Activated CD8-positive, alpha-beta T cell treated with anti-CD3 and anti-CD28 coated beads, Interleukin-2, amount 10 ng/mL, durations not matched to agents 7 days and 5 days (primary cell): ENCODE measurements at regions of chr10 and their contacts with region 1.

Region 1: GRCh38 chr10:6667679-6668270 is 87.7 kb upstream of the PRKCQ start:
- DNase-seq: peak; percentile 70
- ATAC-seq: no peak
- H3K4me3 Mint-ChIP-seq: no peak overlapping the region
- H3K27ac Mint-ChIP-seq: no peak overlapping the region
- H3K4me1 Mint-ChIP-seq: peaks cover 32% of the 10 kb centered on the region
- H3K27me3 Mint-ChIP-seq: peaks cover 5% of the 10 kb centered on the region

Region 2: GRCh38 chr10:6416892-6417512 is 250.8 kb before region 1 on chr10:
- CTCF ChIA-PET with region 1: interaction called, 108 read pairs
- POLR2A ChIA-PET with region 1: no interaction called
- DNase-seq: no peak
- ATAC-seq: peak; percentile 71
- H3K4me3 Mint-ChIP-seq: no peak overlapping the region
- H3K27ac Mint-ChIP-seq: no peak overlapping the region
- H3K4me1 Mint-ChIP-seq: peaks cover 6% of the 10 kb centered on the region
- H3K27me3 Mint-ChIP-seq: no peaks in the 10 kb centered on the region

Region 3: DNA sequence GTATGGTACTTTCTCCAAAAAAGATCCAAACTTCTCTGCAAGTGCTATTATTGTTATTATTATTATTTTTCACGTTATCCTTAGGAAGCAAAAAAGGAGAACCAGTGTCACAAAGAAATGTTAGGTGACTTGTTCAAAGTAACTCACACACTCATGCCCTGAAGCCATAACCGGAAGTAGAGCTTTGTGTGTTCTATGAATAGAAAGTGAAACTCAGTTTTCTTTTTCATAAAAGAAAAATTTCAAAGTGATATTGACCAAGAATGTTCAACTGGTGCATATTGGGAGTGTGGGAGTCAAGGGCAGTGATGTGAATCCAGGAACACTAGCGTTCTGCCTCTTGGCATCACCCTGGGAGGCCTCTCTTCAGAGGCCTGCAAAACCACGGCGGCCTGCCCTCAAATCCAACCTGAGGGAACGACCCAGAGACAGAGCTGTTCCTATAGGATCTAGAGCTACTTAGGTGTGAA is 193.8 kb before region 1 on chr10:
- CTCF ChIA-PET with region 1: interaction called, 20 read pairs
- POLR2A ChIA-PET with region 1: no interaction called
- DNase-seq: peak; percentile 59
- ATAC-seq: peak; percentile 86
- H3K4me3 Mint-ChIP-seq: peak overlapping the region; percentile 90
- H3K27ac Mint-ChIP-seq: peak overlapping the region; percentile 99
- H3K4me1 Mint-ChIP-seq: peaks cover 64% of the 10 kb centered on the region
- H3K27me3 Mint-ChIP-seq: no peaks in the 10 kb centered on the region

Region 4: DNA sequence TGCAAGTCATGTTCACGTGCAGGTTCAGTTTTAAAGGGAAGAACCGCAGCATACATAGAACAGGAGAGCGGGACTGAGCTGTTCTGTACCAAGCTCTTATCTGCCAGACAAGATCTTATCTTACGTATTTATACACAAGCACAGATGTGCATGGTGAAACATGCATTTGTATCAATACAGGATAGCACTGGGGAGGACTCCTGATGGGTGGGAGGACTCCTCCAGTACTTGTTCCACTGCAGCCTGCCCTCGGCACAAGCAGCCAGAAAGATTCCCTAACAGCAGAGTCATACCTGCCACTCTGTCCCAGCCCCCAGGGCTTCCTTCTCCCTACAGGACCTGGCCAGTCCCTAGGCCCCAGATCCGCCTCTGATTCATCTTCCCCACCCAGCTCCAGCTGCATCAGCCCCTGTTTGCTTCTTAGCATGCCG is 74.5 kb before region 1 on chr10:
- CTCF ChIA-PET with region 1: interaction called, 10 read pairs
- POLR2A ChIA-PET with region 1: no interaction called
- DNase-seq: no peak
- ATAC-seq: peak; percentile 45
- H3K4me3 Mint-ChIP-seq: peak overlapping the region; percentile 25
- H3K27ac Mint-ChIP-seq: peak overlapping the region; percentile 96
- H3K4me1 Mint-ChIP-seq: peaks cover 93% of the 10 kb centered on the region
- H3K27me3 Mint-ChIP-seq: no peaks in the 10 kb centered on the region

Region 5: GRCh38 chr10:6642876-6643275 is 24.9 kb before region 1 on chr10:
- CTCF ChIA-PET with region 1: interaction called, 15 read pairs
- POLR2A ChIA-PET with region 1: no interaction called
- DNase-seq: peak; percentile 36
- ATAC-seq: peak; percentile 45
- H3K4me3 Mint-ChIP-seq: no peak overlapping the region
- H3K27ac Mint-ChIP-seq: peak overlapping the region; percentile 64
- H3K4me1 Mint-ChIP-seq: peaks cover 44% of the 10 kb centered on the region
- H3K27me3 Mint-ChIP-seq: no peaks in the 10 kb centered on the region

Region 6: DNA sequence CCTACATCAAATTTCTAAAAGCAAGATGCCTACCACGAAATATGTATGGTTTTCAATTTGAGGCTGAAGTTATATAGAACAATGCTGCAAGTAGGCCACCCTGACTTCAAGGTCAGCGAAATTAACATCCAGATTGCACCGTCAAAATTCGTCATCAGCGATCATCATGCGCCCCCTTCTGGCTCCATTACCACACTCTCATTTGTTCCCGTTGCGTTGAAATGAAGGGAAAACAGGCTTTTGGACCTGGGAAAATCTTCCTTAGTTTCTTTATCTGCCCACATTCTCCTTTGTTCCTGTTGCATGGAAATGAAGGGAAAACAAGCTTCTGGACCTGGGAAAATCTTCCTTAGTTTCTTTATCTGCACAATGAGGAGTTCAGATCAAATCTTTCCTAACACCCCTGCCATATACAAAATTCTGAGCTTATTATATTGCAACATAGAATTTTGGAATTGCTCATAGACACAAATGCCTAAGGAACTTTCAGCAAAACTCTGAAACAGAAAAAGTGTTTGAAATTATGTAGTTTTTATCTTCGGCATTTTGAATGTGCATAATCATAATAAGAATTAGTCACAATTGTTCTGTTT is 10.5 kb after region 1 on chr10:
- CTCF ChIA-PET with region 1: interaction called, 20 read pairs
- POLR2A ChIA-PET with region 1: no interaction called
- DNase-seq: peak; percentile 76
- ATAC-seq: peak; percentile 68
- H3K4me3 Mint-ChIP-seq: no peak overlapping the region
- H3K27ac Mint-ChIP-seq: no peak overlapping the region
- H3K4me1 Mint-ChIP-seq: peaks cover 10% of the 10 kb centered on the region
- H3K27me3 Mint-ChIP-seq: peaks cover 52% of the 10 kb centered on the region